Sigmoid colon (tissue), 7 donors: ENCODE measurements at regions of chr12 and their contacts with region 1.

Region 1: GRCh38 chr12:49842519-49843352 is at the start of gene BCDIN3D:
- DNase-seq: peak; percentile 95
- H3K4me3 ChIP-seq: peak within 1 kb of the TSS; percentile 59 to 80 (median 64)
- H3K27ac ChIP-seq: peak within 1 kb of the TSS; percentile 84 to 91 (median 90)
- H3K4me1 ChIP-seq: peaks cover 0 to 20% (median 17%) of the 10 kb centered on the region in 4 donors
- H3K27me3 ChIP-seq: peaks cover 0 to 3% (median 0%) of the 10 kb centered on the region in 3 donors
- CTCF ChIP-seq: peak in 1 of 4 experiments; percentile 8
- EP300 ChIP-seq: no peak
- POLR2A ChIP-seq: peak; percentile 38 to 69
- total RNA-seq, gene BCDIN3D: 2.7 to 5.4 (median 3.9) TPM

Region 2: DNA sequence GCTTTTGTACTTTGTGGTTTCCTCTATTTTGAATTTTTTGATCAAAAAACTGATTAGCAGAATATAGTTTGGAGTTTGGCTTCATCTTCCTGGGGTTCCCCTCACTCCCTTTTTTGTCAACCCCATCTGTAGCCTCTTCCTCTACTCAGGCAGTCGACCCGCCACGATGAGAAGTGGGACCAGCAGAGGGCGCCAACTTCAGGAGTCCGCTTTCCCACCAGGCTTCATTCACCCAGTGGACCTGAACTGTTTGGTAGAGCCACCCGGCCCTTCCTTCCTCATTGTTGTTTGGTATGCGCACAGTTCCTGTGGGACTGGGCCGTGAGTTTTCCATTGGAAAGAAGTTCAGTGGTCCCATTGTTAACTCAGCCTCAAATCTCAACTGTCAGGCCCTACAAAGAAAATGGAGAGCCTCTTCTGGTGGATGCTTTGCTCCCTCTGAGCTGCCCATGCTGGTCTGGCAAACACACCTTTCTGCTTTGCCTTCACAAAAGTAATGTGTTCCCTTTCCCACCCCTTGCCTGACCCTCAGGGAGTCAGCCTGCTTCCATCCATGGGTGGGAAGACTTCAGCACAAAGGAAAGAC is 79.6 kb before region 1 on chr12:
- intact Hi-C with region 1: loop called (anchors 5 kb)
- DNase-seq: peak; percentile 80
- H3K4me3 ChIP-seq: no peak overlapping the region
- H3K27ac ChIP-seq: peak overlapping the region in 1 of 4 donors; percentile 2
- H3K4me1 ChIP-seq: no peaks in the 10 kb centered on the region
- H3K27me3 ChIP-seq: no peaks in the 10 kb centered on the region
- CTCF ChIP-seq: peak; percentile 13 to 57 (median 35)
- EP300 ChIP-seq: no peak
- POLR2A ChIP-seq: no peak

Region 3: DNA sequence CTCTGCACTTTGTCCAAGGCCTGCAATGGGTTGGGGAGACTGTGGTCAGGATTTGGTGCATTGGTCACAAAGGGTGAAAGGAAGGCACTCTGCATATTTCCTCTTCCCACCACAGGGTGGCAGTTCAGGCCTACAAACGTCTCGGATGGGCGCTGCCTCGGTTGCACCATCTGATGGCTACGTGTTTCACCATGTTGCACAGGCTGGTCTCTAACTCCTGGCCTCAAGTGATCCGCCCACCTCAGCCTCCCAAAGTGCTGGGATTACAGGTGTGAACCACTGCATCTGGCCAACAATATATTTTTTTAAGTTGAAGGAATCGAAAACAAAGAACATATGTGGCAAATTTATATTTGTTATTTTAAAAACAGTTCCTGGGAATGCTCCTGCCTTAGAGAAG is 66.3 kb before region 1 on chr12:
- intact Hi-C with region 1: loop called (anchors 5 kb)
- DNase-seq: peak; percentile 84
- H3K4me3 ChIP-seq: no peak overlapping the region
- H3K27ac ChIP-seq: no peak overlapping the region
- H3K4me1 ChIP-seq: peaks cover 0 to 4% (median 0%) of the 10 kb centered on the region in 4 donors
- H3K27me3 ChIP-seq: no peaks in the 10 kb centered on the region
- CTCF ChIP-seq: peak; percentile 54 to 71 (median 66)
- EP300 ChIP-seq: no peak
- POLR2A ChIP-seq: no peak

Region 4: GRCh38 chr12:49828133-49829091 is 14.3 kb before region 1 on chr12 and contains the start of gene NCKAP5L:
- intact Hi-C with region 1: loop called (anchors 2 kb)
- DNase-seq: peak; percentile 99
- H3K4me3 ChIP-seq: peak within 1 kb of the TSS; percentile 92 to 99 (median 94)
- H3K27ac ChIP-seq: peak within 1 kb of the TSS; percentile 95 to 99 (median 97)
- H3K4me1 ChIP-seq: peaks cover 0 to 49% (median 46%) of the 10 kb centered on the region in 4 donors
- H3K27me3 ChIP-seq: no peaks in the 10 kb centered on the region
- CTCF ChIP-seq: no peak
- EP300 ChIP-seq: no peak
- POLR2A ChIP-seq: peak in 1 of 2 donors; percentile 44
- total RNA-seq, gene NCKAP5L: 10.0 to 23.3 (median 12.6) TPM